ENCODE measurements at regions of chr15 and their contacts with region 1.

Region 1: GRCh38 chr15:73633111-73633990 is at the start of gene NPTN:
- DNase-seq: peak; percentile 97
- ATAC-seq: peak; percentile 90
- H3K4me3 ChIP-seq: peak within 1 kb of the TSS; percentile 53 to 85 (median 76)
- H3K4me3 Mint-ChIP-seq: peak within 1 kb of the TSS; percentile 87
- H3K27ac ChIP-seq: peak within 1 kb of the TSS; percentile 50 to 72
- H3K27ac Mint-ChIP-seq: peak within 1 kb of the TSS; percentile 81
- H3K4me1 ChIP-seq: peaks cover 32 to 34% of the 10 kb centered on the region in 2 donors
- H3K4me1 Mint-ChIP-seq: peaks cover 55% of the 10 kb centered on the region
- H3K27me3 ChIP-seq: peaks cover 0 to 4% (median 0%) of the 10 kb centered on the region in 4 experiments
- H3K27me3 Mint-ChIP-seq: no peaks in the 10 kb centered on the region
- CTCF ChIP-seq: no peak
- total RNA-seq, gene NPTN: 40.2 and 40.5 TPM in 2 replicates

Region 2: GRCh38 chr15:72117486-72118399 is 1515.6 kb before region 1 on chr15 and contains the start of gene MYO9A:
- CTCF ChIA-PET with region 1: no interaction called
- POLR2A ChIA-PET with region 1: no interaction called
- intact Hi-C with region 1: loop called (anchors 5 kb)
- DNase-seq: peak; percentile 100
- ATAC-seq: peak; percentile 74
- H3K4me3 ChIP-seq: peak within 1 kb of the TSS; percentile 72 to 94 (median 86)
- H3K4me3 Mint-ChIP-seq: peak within 1 kb of the TSS; percentile 94
- H3K27ac ChIP-seq: peak within 1 kb of the TSS; percentile 85
- H3K27ac Mint-ChIP-seq: peak within 1 kb of the TSS; percentile 99
- H3K4me1 ChIP-seq: peaks cover 14 to 17% of the 10 kb centered on the region in 2 donors
- H3K4me1 Mint-ChIP-seq: peaks cover 36% of the 10 kb centered on the region
- H3K27me3 ChIP-seq: no peaks in the 10 kb centered on the region
- H3K27me3 Mint-ChIP-seq: no peaks in the 10 kb centered on the region
- CTCF ChIP-seq: no peak
- total RNA-seq, gene MYO9A: 66.1 and 75.5 TPM in 2 replicates

Region 3: DNA sequence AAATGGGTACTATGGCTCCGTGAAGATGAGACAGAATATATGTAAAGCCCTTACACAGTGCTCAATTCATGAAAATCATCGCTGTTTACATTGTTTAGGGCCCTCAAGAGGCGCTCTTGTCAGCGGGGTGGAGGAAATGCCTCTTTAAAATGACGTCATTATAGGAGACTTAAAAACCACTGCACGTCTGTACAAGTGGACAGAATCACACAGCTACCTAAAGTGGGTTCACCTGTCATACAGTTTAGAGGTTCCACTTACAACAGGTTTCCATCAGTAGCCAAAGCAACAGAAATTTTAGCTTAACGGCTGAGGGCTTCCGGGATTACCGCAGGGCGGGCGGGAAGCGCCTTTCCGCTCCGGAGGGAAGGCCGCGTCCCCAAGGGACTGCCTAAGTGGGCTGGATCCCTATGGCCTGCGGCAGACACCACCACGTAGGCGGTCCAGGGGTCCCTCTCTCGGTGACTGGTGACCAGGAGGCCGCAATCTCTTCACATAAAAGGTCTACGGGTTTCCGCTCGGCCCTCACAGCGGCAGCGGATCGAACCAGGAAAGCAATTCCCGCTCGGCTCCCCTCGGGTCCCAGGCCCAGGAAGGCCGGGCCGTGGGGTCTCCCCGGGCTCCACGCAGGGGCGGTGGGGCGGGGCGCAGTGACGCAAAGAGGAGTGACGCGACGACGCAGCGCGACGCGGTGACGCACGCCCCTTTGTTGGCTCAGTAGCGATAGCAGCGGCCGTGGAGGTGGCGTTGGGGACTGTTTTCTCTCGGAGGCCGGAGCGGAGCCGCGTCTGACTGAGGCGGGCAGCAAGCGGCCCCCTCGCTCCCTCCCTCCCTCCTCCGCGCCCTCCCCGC is 1159.5 kb before region 1 on chr15 and contains the start of gene ARIH1:
- CTCF ChIA-PET with region 1: no interaction called
- POLR2A ChIA-PET with region 1: no interaction called
- intact Hi-C with region 1: loop called (anchors 10 kb)
- DNase-seq: peak; percentile 99
- ATAC-seq: peak; percentile 74
- H3K4me3 ChIP-seq: peak within 1 kb of the TSS; percentile 90 to 98 (median 97)
- H3K4me3 Mint-ChIP-seq: peak within 1 kb of the TSS; percentile 95
- H3K27ac ChIP-seq: peak within 1 kb of the TSS; percentile 100
- H3K27ac Mint-ChIP-seq: peak within 1 kb of the TSS; percentile 99
- H3K4me1 ChIP-seq: peaks cover 26 to 38% of the 10 kb centered on the region in 2 donors
- H3K4me1 Mint-ChIP-seq: peaks cover 42% of the 10 kb centered on the region
- H3K27me3 ChIP-seq: no peaks in the 10 kb centered on the region
- H3K27me3 Mint-ChIP-seq: no peaks in the 10 kb centered on the region
- CTCF ChIP-seq: peak; percentile 34
- total RNA-seq, gene ARIH1: 199 and 227 TPM in 2 replicates

Region 4: GRCh38 chr15:73051811-73052678 is 581.3 kb before region 1 on chr15 and contains the start of gene NEO1:
- CTCF ChIA-PET with region 1: no interaction called
- POLR2A ChIA-PET with region 1: no interaction called
- intact Hi-C with region 1: loop called (anchors 10 kb)
- DNase-seq: peak; percentile 84
- ATAC-seq: peak; percentile 76
- H3K4me3 ChIP-seq: peak within 1 kb of the TSS in 4 of 5 experiments; percentile 55 to 78 (median 68)
- H3K4me3 Mint-ChIP-seq: peak within 1 kb of the TSS; percentile 81
- H3K27ac ChIP-seq: no peak within 1 kb of the TSS
- H3K27ac Mint-ChIP-seq: peak within 1 kb of the TSS; percentile 64
- H3K4me1 ChIP-seq: peaks cover 8 to 11% of the 10 kb centered on the region in 2 donors
- H3K4me1 Mint-ChIP-seq: peaks cover 10% of the 10 kb centered on the region
- H3K27me3 ChIP-seq: peaks cover 0 to 32% (median 24%) of the 10 kb centered on the region in 4 experiments
- H3K27me3 Mint-ChIP-seq: peaks cover 37% of the 10 kb centered on the region
- CTCF ChIP-seq: no peak
- total RNA-seq, gene NEO1: 3.9 and 5.6 TPM in 2 replicates

Region 5: DNA sequence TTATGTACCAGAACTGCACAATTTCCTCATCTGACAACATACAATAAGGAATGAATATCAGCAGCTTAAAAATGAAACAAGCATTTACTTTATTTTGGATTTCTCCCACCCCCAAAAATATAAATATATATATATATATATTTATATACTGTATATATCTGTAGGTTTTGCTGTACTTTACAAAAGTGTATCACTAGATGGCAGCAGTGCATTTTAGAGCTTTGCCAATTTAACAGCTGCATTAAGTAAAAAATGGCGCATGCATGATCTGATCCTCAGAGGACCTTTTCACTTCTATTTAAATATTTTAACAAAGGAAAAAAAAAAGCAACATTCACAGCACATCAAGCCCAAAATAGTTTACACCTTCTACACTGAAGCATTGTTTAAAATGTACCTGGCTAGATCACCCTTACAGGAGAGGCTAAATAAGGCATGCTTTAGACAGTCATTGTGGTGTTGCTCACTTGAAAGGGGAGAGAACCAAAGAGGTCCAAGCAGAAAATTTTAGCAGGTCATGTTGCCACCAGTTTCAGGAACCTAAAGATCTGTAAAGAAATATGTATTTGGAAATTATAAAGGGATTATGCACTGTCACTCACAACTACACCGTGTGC is 72.7 kb before region 1 on chr15:
- CTCF ChIA-PET with region 1: interaction called, 81 read pairs
- POLR2A ChIA-PET with region 1: interaction called, 4 read pairs
- intact Hi-C with region 1: loop called (anchors 1 kb)
- DNase-seq: peak; percentile 55
- ATAC-seq: peak; percentile 39
- H3K4me3 ChIP-seq: no peak overlapping the region
- H3K4me3 Mint-ChIP-seq: no peak overlapping the region
- H3K27ac ChIP-seq: no peak overlapping the region
- H3K27ac Mint-ChIP-seq: no peak overlapping the region
- H3K4me1 ChIP-seq: no peaks in the 10 kb centered on the region
- H3K4me1 Mint-ChIP-seq: no peaks in the 10 kb centered on the region
- H3K27me3 ChIP-seq: no peaks in the 10 kb centered on the region
- H3K27me3 Mint-ChIP-seq: no peaks in the 10 kb centered on the region
- CTCF ChIP-seq: peak; percentile 66

Region 6: DNA sequence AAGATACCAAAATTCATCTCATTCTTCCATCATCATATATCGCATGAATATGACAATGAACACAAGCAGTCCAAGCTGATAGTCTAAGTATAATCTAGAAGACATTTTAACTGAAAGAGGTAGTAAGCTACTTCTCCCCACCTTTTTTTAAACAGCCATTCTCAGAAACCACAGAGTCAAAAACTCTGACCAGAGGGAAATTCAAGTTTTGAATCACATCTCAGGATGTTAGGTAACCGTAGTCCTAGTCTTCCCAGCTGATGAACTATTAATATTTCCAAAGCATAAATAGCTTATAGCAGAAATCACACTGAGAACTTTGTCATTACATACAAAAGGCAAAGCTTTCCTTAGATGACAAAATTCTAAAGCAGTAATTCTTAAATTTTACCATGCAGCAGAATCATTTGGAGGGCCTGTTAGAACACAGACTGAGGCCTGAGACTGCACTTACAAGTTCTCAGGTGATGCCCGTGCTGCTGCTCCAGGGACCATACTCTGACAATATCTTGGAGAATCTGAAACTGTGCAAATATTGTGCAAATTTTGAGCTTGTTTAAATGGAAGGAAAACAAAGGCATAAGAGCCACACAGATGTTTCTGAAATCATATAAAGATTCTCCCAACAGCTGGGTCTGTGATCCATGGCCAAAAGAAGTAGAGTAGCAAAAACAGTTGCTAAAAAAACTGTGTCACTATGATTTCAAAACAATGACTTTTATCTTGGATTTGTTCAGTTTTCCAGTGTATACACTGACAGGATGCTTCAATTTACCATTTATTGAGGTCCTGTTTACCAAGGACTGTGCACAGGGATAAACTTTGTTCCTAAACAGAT is 25.7 kb before region 1 on chr15:
- CTCF ChIA-PET with region 1: interaction called, 12 read pairs
- POLR2A ChIA-PET with region 1: no interaction called
- intact Hi-C with region 1: no loop called
- DNase-seq: no peak
- ATAC-seq: no peak
- H3K4me3 ChIP-seq: no peak overlapping the region
- H3K4me3 Mint-ChIP-seq: no peak overlapping the region
- H3K27ac ChIP-seq: no peak overlapping the region
- H3K27ac Mint-ChIP-seq: no peak overlapping the region
- H3K4me1 ChIP-seq: peaks cover 10 to 11% of the 10 kb centered on the region in 2 donors
- H3K4me1 Mint-ChIP-seq: peaks cover 52% of the 10 kb centered on the region
- H3K27me3 ChIP-seq: no peaks in the 10 kb centered on the region
- H3K27me3 Mint-ChIP-seq: no peaks in the 10 kb centered on the region
- CTCF ChIP-seq: no peak

Region 7: GRCh38 chr15:73991726-73992593 is 358.6 kb after region 1 on chr15 and contains the start of gene STOML1:
- CTCF ChIA-PET with region 1: no interaction called
- POLR2A ChIA-PET with region 1: no interaction called
- intact Hi-C with region 1: loop called (anchors 5 kb)
- DNase-seq: peak; percentile 95
- ATAC-seq: peak; percentile 77
- H3K4me3 ChIP-seq: peak within 1 kb of the TSS; percentile 17 to 85 (median 62)
- H3K4me3 Mint-ChIP-seq: peak within 1 kb of the TSS; percentile 79
- H3K27ac ChIP-seq: peak within 1 kb of the TSS; percentile 50 to 67
- H3K27ac Mint-ChIP-seq: peak within 1 kb of the TSS; percentile 65
- H3K4me1 ChIP-seq: peaks cover 45 to 60% of the 10 kb centered on the region in 2 donors
- H3K4me1 Mint-ChIP-seq: peaks cover 54% of the 10 kb centered on the region
- H3K27me3 ChIP-seq: no peaks in the 10 kb centered on the region
- H3K27me3 Mint-ChIP-seq: no peaks in the 10 kb centered on the region
- CTCF ChIP-seq: peak; percentile 94
- total RNA-seq, gene STOML1: 6.2 and 8.3 TPM in 2 replicates